Activated CD8-positive, alpha-beta T cell treated with anti-CD3 and anti-CD28 coated beads for 36 hours (primary cell): ENCODE measurements at regions of chr19 and their contacts with region 1.

Region 1: GRCh38 chr19:42529248-42529764 is 1.0 kb upstream of the CEACAM1 start:
- DNase-seq: peak; percentile 83
- ATAC-seq: peak; percentile 87
- H3K4me3 Mint-ChIP-seq: peak overlapping the region; percentile 72
- H3K27ac Mint-ChIP-seq: peak overlapping the region; percentile 94
- H3K4me1 Mint-ChIP-seq: peaks cover 27% of the 10 kb centered on the region
- H3K27me3 Mint-ChIP-seq: no peaks in the 10 kb centered on the region
- CTCF ChIP-seq: peak; percentile 88

Region 2: DNA sequence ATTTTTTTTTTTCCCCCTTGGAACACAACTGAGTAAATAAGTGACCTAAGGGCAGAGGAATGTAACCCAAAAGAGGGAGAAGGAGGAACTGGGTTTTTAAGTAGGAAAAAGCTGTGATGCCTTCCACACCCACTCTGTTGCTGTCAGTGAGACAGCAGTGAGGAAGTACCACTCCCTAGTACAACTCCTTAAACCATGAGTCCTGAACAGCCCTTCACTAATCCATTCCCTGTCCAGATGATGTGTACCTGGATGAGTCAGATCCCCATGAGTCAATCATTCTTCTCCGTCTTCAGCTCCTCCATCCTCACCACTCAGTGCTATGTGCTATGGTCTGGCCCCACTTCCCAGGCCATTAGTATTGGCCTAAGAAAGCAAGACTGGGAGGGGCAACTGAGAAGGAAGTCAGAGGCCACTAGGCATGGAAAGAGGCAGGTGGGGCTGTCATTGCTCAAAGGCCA is 73.7 kb before region 1 on chr19:
- CTCF ChIA-PET with region 1: interaction called, 138 read pairs
- POLR2A ChIA-PET with region 1: interaction called, 3 read pairs
- intact Hi-C with region 1: loop called (anchors 1 kb)
- DNase-seq: no peak
- ATAC-seq: no peak
- H3K4me3 Mint-ChIP-seq: no peak overlapping the region
- H3K27ac Mint-ChIP-seq: no peak overlapping the region
- H3K4me1 Mint-ChIP-seq: peaks cover 16% of the 10 kb centered on the region
- H3K27me3 Mint-ChIP-seq: no peaks in the 10 kb centered on the region
- CTCF ChIP-seq: no peak

Region 3: DNA sequence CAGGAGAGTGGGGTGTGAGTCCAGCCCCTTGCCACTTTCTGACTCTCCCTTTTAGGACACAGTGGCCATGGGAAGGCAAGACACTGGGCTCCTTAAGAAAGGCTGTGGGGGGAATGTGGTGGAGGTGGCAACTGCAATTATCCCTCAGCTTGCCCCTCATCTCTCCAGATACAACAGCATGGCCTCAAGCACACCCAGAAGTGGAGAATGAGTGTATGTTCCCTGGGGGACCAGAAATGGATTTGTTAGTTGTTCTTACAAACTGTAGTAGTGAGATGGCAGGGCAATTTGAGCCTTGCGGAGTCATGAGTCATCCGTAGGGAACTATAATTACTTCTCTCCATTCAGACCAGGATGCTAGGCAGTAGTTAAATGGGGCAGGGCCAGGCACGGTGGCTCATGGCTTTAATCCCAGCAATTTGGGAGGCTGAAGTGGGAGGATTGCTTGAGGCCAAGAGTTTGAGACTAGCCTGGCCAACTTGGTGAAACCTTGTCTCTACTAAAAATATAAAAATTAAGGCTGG is 61.0 kb before region 1 on chr19:
- CTCF ChIA-PET with region 1: interaction called, 36 read pairs
- POLR2A ChIA-PET with region 1: no interaction called
- intact Hi-C with region 1: no loop called
- DNase-seq: no peak
- ATAC-seq: no peak
- H3K4me3 Mint-ChIP-seq: no peak overlapping the region
- H3K27ac Mint-ChIP-seq: no peak overlapping the region
- H3K4me1 Mint-ChIP-seq: peaks cover 28% of the 10 kb centered on the region
- H3K27me3 Mint-ChIP-seq: peaks cover 2% of the 10 kb centered on the region
- CTCF ChIP-seq: no peak

Region 4: DNA sequence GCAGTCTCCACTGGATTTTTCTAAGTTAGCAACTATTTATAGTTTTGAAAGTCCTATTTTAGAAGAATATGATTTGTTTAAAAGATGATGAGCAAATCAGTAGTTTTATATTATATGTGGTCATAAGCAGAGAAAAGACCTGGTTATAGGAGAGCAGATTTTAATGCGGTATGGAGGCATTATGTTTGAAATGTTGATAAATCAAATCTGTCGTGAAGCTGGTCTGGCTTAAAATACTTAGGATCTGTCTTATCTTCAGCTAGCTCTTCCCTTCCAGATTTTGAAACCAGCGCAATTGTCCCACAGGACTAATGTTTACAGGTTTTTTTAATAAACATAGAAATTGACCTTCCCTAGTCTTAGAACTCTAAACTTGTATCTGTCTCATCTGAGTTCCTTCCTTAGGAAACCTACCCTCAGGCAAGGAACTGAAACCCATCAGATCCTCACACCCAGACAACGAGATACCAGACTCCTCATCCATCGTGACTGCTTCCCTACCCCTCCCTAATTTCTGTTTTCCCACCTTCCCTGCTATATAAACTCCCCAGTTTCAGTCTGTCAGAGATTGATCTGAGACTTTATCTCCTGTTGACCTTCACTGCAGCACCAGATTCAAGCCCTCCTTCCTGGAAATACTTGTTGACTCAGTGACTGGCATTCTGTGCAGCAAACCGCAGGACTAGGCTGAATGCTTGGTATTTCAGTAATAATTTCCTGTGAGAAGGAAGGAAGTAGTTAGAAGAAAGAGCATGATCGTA is 48.8 kb before region 1 on chr19:
- CTCF ChIA-PET with region 1: interaction called, 16 read pairs
- POLR2A ChIA-PET with region 1: no interaction called
- intact Hi-C with region 1: loop called (anchors 1 kb)
- DNase-seq: peak; percentile 65
- ATAC-seq: peak; percentile 82
- H3K4me3 Mint-ChIP-seq: peak overlapping the region; percentile 22
- H3K27ac Mint-ChIP-seq: peak overlapping the region; percentile 84
- H3K4me1 Mint-ChIP-seq: peaks cover 16% of the 10 kb centered on the region
- H3K27me3 Mint-ChIP-seq: peaks cover 2% of the 10 kb centered on the region
- CTCF ChIP-seq: no peak

Region 5: GRCh38 chr19:42514449-42514848 is 14.9 kb before region 1 on chr19:
- CTCF ChIA-PET with region 1: interaction called, 28 read pairs
- POLR2A ChIA-PET with region 1: no interaction called
- intact Hi-C with region 1: no loop called
- DNase-seq: peak; percentile 20
- ATAC-seq: peak; percentile 72
- H3K4me3 Mint-ChIP-seq: no peak overlapping the region
- H3K27ac Mint-ChIP-seq: no peak overlapping the region
- H3K4me1 Mint-ChIP-seq: peaks cover 20% of the 10 kb centered on the region
- H3K27me3 Mint-ChIP-seq: no peaks in the 10 kb centered on the region
- CTCF ChIP-seq: no peak

Region 6: GRCh38 chr19:42589792-42590191 is 60.5 kb after region 1 on chr19:
- CTCF ChIA-PET with region 1: no interaction called
- POLR2A ChIA-PET with region 1: no interaction called
- intact Hi-C with region 1: no loop called
- DNase-seq: no peak
- ATAC-seq: no peak
- H3K4me3 Mint-ChIP-seq: no peak overlapping the region
- H3K27ac Mint-ChIP-seq: no peak overlapping the region
- H3K4me1 Mint-ChIP-seq: no peaks in the 10 kb centered on the region
- H3K27me3 Mint-ChIP-seq: peaks cover 4% of the 10 kb centered on the region
- CTCF ChIP-seq: no peak